Activated CD4-positive, alpha-beta T cell treated with anti-CD3 and anti-CD28 coated beads for 36 hours (primary cell): ENCODE measurements at regions of chr5 and their contacts with region 1.

Region 1: GRCh38 chr5:35963381-35963843 is 25.0 kb upstream of the CAPSL start:
- DNase-seq: peak; percentile 51
- ATAC-seq: no peak
- H3K4me3 Mint-ChIP-seq: no peak overlapping the region
- H3K27ac Mint-ChIP-seq: no peak overlapping the region
- H3K4me1 Mint-ChIP-seq: no peaks in the 10 kb centered on the region
- H3K27me3 Mint-ChIP-seq: peaks cover 16% of the 10 kb centered on the region

Region 2: GRCh38 chr5:36305571-36306326 is 342.3 kb after region 1 on chr5:
- CTCF ChIA-PET with region 1: no interaction called
- POLR2A ChIA-PET with region 1: no interaction called
- intact Hi-C with region 1: loop called in 1 of 2 experiments (anchors 10 kb)
- DNase-seq: peak; percentile 54
- ATAC-seq: no peak
- H3K4me3 Mint-ChIP-seq: no peak overlapping the region
- H3K27ac Mint-ChIP-seq: no peak overlapping the region
- H3K4me1 Mint-ChIP-seq: peaks cover 13% of the 10 kb centered on the region
- H3K27me3 Mint-ChIP-seq: peaks cover 4% of the 10 kb centered on the region